Ascending aorta (tissue), 2 donors: ENCODE measurements at regions of chr3 and their contacts with region 1.

Region 1: GRCh38 chr3:177827511-177828207 is 630.4 kb upstream of the TBL1XR1 start:
- DNase-seq: no peak
- H3K4me3 ChIP-seq: no peak overlapping the region
- H3K27ac ChIP-seq: peak overlapping the region in 1 of 2 donors; percentile 30
- H3K4me1 ChIP-seq: peaks cover 10 to 28% of the 10 kb centered on the region in 2 donors
- H3K27me3 ChIP-seq: no peaks in the 10 kb centered on the region
- CTCF ChIP-seq: no peak

Region 2: GRCh38 chr3:177906126-177906511 is 78.5 kb after region 1 on chr3:
- intact Hi-C with region 1: loop called (anchors 5 kb)
- DNase-seq: no peak
- H3K4me3 ChIP-seq: no peak overlapping the region
- H3K27ac ChIP-seq: peak overlapping the region; percentile 51 to 62
- H3K4me1 ChIP-seq: peaks cover 5 to 29% of the 10 kb centered on the region in 2 donors
- H3K27me3 ChIP-seq: no peaks in the 10 kb centered on the region
- CTCF ChIP-seq: peak in 2 of 3 experiments; percentile 5 to 18

Region 3: GRCh38 chr3:177977381-177978158 is 149.9 kb after region 1 on chr3:
- intact Hi-C with region 1: no loop called
- DNase-seq: no peak
- H3K4me3 ChIP-seq: no peak overlapping the region
- H3K27ac ChIP-seq: no peak overlapping the region
- H3K4me1 ChIP-seq: no peaks in the 10 kb centered on the region
- H3K27me3 ChIP-seq: no peaks in the 10 kb centered on the region
- CTCF ChIP-seq: no peak